AG04450 (cell line): ENCODE measurements at regions of chr10 and their contacts with region 1.

Region 1: GRCh38 chr10:84537447-84537931 is 209.1 kb downstream of the CCSER2 start:
- DNase-seq: peak; percentile 21
- H3K4me3 ChIP-seq: no peak overlapping the region
- H3K27ac ChIP-seq: no peak overlapping the region
- H3K27me3 ChIP-seq: no peaks in the 10 kb centered on the region
- CTCF ChIP-seq: peak; percentile 77

Region 2: GRCh38 chr10:84139126-84140035 is 398.1 kb before region 1 on chr10 and contains the start of gene GHITM:
- CTCF ChIA-PET with region 1: interaction called, 10 read pairs
- POLR2A ChIA-PET with region 1: interaction called, 3 read pairs
- DNase-seq: peak; percentile 96
- H3K4me3 ChIP-seq: peak within 1 kb of the TSS; percentile 99
- H3K27ac ChIP-seq: peak within 1 kb of the TSS; percentile 89
- H3K27me3 ChIP-seq: no peaks in the 10 kb centered on the region
- CTCF ChIP-seq: peak; percentile 43
- polyA plus RNA-seq, gene GHITM: 189 and 227 TPM in 2 replicates

Region 3: GRCh38 chr10:84264611-84265141 is 272.8 kb before region 1 on chr10:
- CTCF ChIA-PET with region 1: interaction called, 427 read pairs
- POLR2A ChIA-PET with region 1: no interaction called
- DNase-seq: peak; percentile 32
- H3K4me3 ChIP-seq: no peak overlapping the region
- H3K27ac ChIP-seq: no peak overlapping the region
- H3K27me3 ChIP-seq: peaks cover 10% of the 10 kb centered on the region
- CTCF ChIP-seq: peak; percentile 98

Region 4: DNA sequence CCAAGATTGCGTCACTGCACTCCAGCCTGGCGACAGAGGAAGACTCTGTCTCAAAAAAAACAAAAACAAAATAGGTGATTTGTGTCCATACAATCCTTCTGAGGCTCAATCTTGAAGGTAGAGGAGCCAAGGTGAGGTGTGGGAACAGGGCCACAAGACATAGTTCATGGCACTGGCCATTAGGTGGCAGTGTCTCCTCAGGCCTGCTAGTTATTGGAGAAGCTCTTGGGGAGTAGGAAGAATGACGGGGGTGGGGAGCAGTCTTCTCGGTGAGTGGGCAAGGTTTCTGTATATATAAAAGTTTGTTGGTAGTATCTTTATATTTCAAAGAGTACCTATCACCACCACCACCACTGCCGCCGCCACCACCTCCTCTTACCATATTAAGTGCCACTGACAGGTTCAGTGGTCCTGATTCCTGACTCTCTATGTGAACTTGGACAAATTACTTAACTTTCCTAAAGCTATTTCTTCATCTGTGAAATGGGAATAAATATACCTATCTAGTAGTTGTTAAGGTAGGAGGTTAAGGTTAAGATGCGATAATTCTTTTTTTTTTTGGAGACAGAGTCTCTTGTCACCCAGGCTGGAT is 185.1 kb before region 1 on chr10:
- CTCF ChIA-PET with region 1: interaction called, 62 read pairs
- POLR2A ChIA-PET with region 1: no interaction called
- DNase-seq: no peak
- H3K4me3 ChIP-seq: no peak overlapping the region
- H3K27ac ChIP-seq: no peak overlapping the region
- H3K27me3 ChIP-seq: no peaks in the 10 kb centered on the region
- CTCF ChIP-seq: peak; percentile 78

Region 5: DNA sequence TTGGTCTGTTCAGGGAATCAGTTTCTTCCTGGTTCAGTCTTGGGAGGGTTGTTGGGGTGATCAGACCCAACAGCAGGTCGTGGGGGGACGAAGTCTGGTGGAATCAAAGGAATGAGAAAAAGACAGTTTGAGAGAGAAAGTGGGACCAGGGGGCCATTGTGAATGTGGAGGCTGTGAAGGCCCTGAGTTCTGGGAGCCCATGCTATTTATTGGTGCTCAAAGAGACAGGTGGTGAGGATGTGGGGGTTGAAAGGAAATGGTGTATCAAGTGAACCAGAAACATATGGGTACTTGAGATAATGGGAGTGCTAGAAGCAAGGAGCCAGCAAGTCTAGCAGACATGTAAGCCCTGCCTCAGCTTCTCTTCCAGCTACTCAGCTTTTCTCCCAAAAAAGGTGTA is 125.0 kb before region 1 on chr10:
- CTCF ChIA-PET with region 1: interaction called, 10 read pairs
- POLR2A ChIA-PET with region 1: no interaction called
- DNase-seq: no peak
- H3K4me3 ChIP-seq: no peak overlapping the region
- H3K27ac ChIP-seq: no peak overlapping the region
- H3K27me3 ChIP-seq: no peaks in the 10 kb centered on the region
- CTCF ChIP-seq: no peak

Region 6: DNA sequence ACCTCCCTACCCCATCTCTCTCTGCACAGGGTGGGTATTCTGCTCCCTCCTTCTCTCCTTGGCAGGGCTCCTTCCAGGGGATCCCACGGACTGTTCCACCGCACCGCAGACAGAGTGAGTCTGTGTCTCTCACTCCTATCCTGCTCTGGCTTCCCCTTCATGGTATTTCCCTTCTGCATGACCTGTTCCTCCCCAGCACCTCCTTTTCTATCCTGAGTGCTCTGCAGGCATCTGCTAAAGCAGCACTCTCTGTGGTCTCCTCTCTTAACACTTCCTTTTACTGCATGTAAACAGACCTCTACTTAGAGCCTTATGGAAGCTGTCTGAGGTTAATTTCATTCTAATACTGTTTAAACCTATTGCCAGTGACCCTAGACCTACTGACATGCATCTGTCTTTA is 37.6 kb before region 1 on chr10:
- CTCF ChIA-PET with region 1: interaction called, 11 read pairs
- POLR2A ChIA-PET with region 1: no interaction called
- DNase-seq: no peak
- H3K4me3 ChIP-seq: no peak overlapping the region
- H3K27ac ChIP-seq: no peak overlapping the region
- H3K27me3 ChIP-seq: no peaks in the 10 kb centered on the region
- CTCF ChIP-seq: no peak

Region 7: DNA sequence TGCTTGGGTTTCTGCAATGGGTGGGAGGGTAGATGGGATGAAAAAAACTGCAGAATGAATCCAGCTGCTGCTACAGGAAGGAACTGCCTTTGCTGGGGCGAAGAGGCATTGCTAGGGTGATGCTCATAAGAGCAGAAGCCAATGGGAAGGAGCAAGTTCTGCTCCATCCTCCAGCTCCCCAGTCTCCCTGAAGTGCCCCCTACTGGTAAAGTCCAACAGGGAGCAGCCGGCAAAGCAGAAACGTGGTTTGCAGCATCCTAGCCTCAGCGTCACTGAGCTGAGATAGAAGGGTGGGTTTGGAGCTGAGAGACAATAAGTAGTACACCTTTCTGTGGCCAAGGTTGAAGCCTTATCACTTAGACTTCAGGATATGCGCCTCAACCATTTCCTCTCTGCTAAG is 11.4 kb after region 1 on chr10:
- CTCF ChIA-PET with region 1: interaction called, 33 read pairs
- POLR2A ChIA-PET with region 1: no interaction called
- DNase-seq: no peak
- H3K4me3 ChIP-seq: no peak overlapping the region
- H3K27ac ChIP-seq: no peak overlapping the region
- H3K27me3 ChIP-seq: peaks cover 8% of the 10 kb centered on the region
- CTCF ChIP-seq: no peak; the same call in 1 of the 2 replicates

Region 8: DNA sequence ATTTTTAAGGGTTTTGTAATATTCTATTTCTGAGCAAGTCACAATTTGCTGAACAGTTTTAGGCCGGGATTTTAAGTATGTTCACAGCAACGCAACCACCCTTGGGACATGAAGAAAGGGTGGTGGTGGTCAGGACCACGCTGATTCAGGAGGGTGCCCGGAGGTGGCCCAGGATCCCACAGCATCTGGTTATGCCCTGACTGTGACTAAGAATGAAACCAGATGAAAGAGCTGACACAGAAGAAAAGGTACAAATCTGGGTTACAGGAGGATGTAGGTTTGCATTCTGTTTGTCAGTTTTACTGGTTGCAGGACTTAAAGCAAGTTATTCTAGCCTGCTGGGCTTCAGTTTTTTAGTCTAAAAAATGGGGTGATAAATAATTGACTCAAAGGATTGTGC is 70.6 kb after region 1 on chr10:
- CTCF ChIA-PET with region 1: no interaction called
- POLR2A ChIA-PET with region 1: no interaction called
- DNase-seq: no peak
- H3K4me3 ChIP-seq: no peak overlapping the region
- H3K27ac ChIP-seq: no peak overlapping the region
- H3K27me3 ChIP-seq: peaks cover 2% of the 10 kb centered on the region
- CTCF ChIP-seq: no peak